PC-3 (cell line): ENCODE measurements at regions of chr12 and their contacts with region 1.

Region 1: DNA sequence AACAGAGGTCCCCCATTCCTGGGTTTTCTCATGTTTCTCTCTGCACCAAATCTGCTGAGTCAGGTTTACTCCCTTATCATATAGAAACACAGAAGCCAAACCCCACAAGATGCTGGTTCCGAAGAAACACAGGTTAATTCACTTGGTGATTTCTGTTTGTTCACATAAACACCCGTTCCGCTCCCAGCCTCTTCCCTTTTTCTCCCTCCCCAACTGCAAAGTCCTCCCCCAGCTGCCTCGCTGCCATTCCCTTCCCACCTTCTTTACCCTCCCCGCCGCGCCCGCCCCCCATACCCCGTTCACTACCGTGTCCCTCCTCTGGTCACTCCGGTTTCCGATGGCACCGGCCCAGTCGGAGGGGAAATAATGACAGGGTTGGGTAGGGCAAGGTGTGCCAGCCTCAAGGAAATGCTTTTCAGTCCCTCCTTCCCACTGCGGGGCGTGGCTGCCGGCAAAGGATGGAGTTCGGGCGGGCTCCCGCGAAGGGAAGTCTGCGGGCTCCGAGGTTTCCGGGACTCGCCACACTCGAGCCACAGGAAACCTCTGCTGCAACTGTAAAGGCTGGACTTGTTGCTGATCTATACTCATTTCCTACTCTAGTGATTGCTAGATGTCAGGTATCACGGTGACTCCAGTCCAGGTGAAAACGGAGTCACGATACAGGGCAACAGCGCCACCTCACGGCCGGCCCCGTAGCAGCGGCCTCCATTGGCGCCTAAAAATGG is at the start of gene STYK1:
- DNase-seq: peak; percentile 89
- ATAC-seq: peak; percentile 86
- H3K4me3 ChIP-seq: peak within 1 kb of the TSS; percentile 80
- H3K27ac ChIP-seq: peak within 1 kb of the TSS; percentile 86
- H3K4me1 ChIP-seq: peaks cover 15% of the 10 kb centered on the region; the same call in 1 of the 2 replicates
- H3K27me3 ChIP-seq: no peaks in the 10 kb centered on the region
- CTCF ChIP-seq: peak; percentile 90
- total RNA-seq, gene STYK1: 4.3 and 8.6 TPM in 2 replicates

Region 2: DNA sequence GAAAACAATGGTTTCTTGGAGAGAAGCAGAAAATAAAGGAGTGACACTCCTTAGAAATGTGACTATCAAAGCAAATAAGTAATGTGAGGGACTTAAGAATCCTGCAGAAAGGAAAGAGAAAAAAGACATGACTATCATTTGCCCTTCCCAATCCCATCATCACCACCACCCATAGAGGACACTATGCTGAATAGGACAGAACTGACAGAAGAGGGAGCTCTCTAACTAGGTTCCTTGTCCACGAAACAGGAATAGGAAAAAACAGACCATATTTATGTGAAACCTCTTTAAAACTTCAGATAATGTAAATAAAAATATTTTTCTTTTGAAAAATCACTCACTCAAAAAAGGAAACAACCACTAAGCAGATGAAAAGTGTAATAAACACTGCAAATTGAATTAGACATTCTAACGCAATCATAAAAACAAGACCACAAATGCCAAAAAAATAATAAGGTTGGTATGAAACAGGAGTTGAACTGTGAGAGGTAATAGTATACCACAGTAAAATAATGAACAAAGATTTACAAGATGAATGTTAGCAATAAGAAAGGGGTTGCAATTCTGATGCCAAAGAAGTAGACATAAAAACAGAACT is 342.1 kb before region 1 on chr12:
- CTCF ChIA-PET with region 1: no interaction called
- POLR2A ChIA-PET with region 1: no interaction called
- intact Hi-C with region 1: loop called (anchors 1 kb)
- DNase-seq: peak; percentile 67
- ATAC-seq: peak; percentile 81
- H3K4me3 ChIP-seq: no peak overlapping the region
- H3K27ac ChIP-seq: no peak overlapping the region
- H3K4me1 ChIP-seq: 0 out of 2 replicates have a peak, but pooled peaks cover 2% of the 10 kb centered on the region
- H3K27me3 ChIP-seq: no peaks in the 10 kb centered on the region
- CTCF ChIP-seq: peak; percentile 83

Region 3: DNA sequence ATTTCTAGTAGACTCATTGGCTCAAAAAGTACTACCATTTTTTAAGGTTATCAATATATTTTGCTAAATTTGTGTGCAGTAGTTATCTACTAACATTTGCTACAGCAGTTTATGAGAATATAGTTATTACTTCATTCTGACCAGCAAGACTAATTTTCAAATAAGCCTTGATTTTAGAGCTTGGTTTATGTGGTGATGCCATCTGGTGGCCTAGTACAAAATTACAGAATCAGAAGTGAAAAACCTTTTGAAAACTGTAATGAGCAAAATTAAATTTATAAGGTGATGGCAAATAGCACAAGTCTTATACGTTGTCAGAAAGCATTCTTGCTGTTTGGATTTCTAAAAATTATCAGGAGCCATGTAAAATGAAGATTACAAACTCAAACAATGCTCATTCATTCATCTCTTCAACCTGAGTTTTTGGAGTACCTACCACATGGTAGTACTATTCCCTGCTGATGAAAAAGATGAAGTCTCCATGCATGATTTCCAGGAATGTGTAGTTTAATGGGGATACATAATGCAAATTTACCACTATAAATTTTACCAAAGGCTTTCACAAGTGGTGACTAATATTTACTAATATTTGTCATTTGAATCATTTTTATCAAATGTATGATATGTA is 111.4 kb before region 1 on chr12:
- CTCF ChIA-PET with region 1: no interaction called
- POLR2A ChIA-PET with region 1: no interaction called
- intact Hi-C with region 1: loop called (anchors 1 kb)
- DNase-seq: peak; percentile 87
- ATAC-seq: peak; percentile 88
- H3K4me3 ChIP-seq: no peak overlapping the region
- H3K27ac ChIP-seq: peak overlapping the region; percentile 84
- H3K4me1 ChIP-seq: peaks cover 15% of the 10 kb centered on the region
- H3K27me3 ChIP-seq: no peaks in the 10 kb centered on the region
- CTCF ChIP-seq: peak; percentile 77

Region 4: GRCh38 chr12:10607885-10608458 is 65.8 kb before region 1 on chr12:
- CTCF ChIA-PET with region 1: no interaction called
- POLR2A ChIA-PET with region 1: no interaction called
- intact Hi-C with region 1: loop called (anchors 1 kb)
- DNase-seq: peak; percentile 25
- ATAC-seq: no peak
- H3K4me3 ChIP-seq: no peak overlapping the region
- H3K27ac ChIP-seq: no peak overlapping the region
- H3K4me1 ChIP-seq: peaks cover 8% of the 10 kb centered on the region; the same call in 1 of the 2 replicates
- H3K27me3 ChIP-seq: no peaks in the 10 kb centered on the region
- CTCF ChIP-seq: peak; percentile 54

Region 5: DNA sequence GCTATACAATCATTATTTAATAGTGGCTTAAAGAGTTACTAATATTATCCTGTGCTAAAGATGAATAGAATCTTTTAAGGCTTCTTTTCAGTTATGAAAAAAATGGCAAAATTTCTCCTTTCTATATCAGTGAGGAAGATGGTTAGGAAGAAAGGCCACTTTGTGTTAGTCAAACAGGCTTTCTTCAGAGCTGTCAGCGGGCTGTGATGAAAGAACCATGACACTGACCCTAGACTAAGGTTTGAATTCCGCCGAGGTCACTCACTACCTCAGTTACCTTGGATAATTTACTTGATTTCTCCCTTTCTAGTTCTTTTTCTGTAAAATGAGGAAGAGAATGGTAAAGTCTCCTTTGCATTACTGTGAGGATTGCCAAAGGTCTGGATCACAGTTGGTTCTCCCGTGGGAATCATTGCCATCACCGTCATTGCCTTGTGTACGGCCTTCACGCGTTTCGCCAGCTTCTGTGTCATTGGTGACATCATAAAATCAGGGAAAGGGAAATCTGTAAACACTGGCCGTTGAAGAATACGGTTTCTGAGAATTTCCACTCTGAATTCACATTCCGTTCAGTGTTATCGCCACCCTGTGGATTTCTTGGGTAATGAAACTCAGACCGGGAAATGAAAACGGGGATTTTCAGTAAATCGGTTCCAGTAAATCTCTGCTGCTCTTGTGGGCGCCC is 76.0 kb after region 1 on chr12:
- CTCF ChIA-PET with region 1: no interaction called
- POLR2A ChIA-PET with region 1: no interaction called
- intact Hi-C with region 1: loop called (anchors 1 kb)
- DNase-seq: peak; percentile 93
- ATAC-seq: peak; percentile 74
- H3K4me3 ChIP-seq: peak overlapping the region; percentile 59
- H3K27ac ChIP-seq: no peak overlapping the region
- H3K4me1 ChIP-seq: peaks cover 14% of the 10 kb centered on the region
- H3K27me3 ChIP-seq: no peaks in the 10 kb centered on the region
- CTCF ChIP-seq: peak; percentile 95